PC-3 (cell line): ENCODE measurements at regions of chr9 and their contacts with region 1.

Region 1: GRCh38 chr9:111828193-111828592 is 33.5 kb upstream of the SHOC1 start:
- DNase-seq: peak; percentile 40
- ATAC-seq: no peak
- H3K4me3 ChIP-seq: no peak overlapping the region
- H3K27ac ChIP-seq: no peak overlapping the region
- H3K4me1 ChIP-seq: no peaks in the 10 kb centered on the region
- H3K27me3 ChIP-seq: no peaks in the 10 kb centered on the region
- CTCF ChIP-seq: peak; percentile 40; the same call in 1 of the 2 replicates

Region 2: DNA sequence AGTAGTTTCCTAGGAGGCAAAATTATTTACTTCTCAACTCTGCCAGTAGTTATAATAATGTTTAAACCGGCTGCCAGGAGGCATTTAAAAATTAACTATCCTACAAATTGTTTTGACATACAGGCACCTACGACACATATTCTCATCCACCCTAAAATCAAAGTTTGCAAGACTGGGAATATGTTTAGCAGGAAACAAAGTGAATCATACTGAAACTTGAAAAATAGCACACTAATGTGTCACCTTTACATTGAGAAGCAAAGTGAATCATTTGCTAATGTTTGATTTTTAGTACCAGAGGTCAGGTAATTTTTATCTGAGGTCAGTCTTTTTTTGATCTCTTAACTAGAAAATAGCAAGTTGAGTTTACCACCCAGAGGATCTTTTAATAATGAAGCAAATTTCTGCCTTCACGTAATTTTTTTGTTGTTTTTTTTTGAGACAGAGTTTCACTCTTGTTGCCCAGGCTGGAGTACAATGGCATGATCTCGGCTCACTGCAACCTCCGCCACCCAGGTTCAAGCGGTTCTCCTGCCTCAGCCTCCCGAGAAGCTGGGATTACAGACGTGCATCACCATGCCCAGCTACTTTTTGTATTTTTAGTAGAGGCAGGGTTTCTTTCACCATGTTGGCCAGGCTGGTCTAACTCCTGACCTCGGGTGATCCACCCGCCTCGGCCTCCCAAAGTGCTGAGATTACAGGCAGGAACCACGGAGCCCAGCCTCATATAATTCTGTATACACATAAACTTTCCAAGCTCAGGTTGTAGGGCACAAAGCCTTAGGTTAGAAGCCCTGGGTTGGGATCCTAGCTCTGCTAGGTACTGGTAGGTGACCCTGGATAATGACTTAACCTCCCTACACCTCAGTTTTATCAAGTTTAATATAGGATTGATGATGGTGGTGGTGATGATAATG is 192.7 kb after region 1 on chr9:
- CTCF ChIA-PET with region 1: no interaction called
- POLR2A ChIA-PET with region 1: no interaction called
- intact Hi-C with region 1: loop called (anchors 5 kb)
- DNase-seq: peak; percentile 89
- ATAC-seq: peak; percentile 90
- H3K4me3 ChIP-seq: no peak overlapping the region
- H3K27ac ChIP-seq: peak overlapping the region; percentile 95
- H3K4me1 ChIP-seq: peaks cover 23% of the 10 kb centered on the region
- H3K27me3 ChIP-seq: no peaks in the 10 kb centered on the region
- CTCF ChIP-seq: no peak

Region 3: GRCh38 chr9:112074250-112075008 is 246.2 kb after region 1 on chr9:
- CTCF ChIA-PET with region 1: interaction called, 4 read pairs
- POLR2A ChIA-PET with region 1: no interaction called
- intact Hi-C with region 1: loop called (anchors 1 kb)
- DNase-seq: peak; percentile 86
- ATAC-seq: peak; percentile 78
- H3K4me3 ChIP-seq: no peak overlapping the region
- H3K27ac ChIP-seq: peak overlapping the region; percentile 81
- H3K4me1 ChIP-seq: peaks cover 28% of the 10 kb centered on the region
- H3K27me3 ChIP-seq: no peaks in the 10 kb centered on the region
- CTCF ChIP-seq: peak; percentile 93

Region 4: DNA sequence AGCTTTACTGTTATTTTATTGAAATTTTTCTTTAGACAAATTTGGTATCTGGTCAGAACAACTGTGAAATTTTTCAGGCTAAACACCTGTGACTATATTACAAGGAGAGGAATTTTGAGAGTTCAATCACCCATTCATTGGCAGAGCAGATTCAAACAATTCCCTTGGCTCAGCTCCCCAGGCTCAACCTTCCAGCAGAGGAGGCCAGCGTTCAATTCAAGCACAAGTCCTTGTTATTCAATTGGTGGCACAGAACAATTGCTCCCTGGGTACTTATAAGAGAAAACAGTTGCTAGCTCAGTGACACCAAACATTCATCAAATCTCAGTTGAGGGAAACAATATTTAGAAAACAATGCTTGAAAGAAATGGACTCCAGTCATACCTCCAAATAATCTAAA is 263.6 kb after region 1 on chr9:
- CTCF ChIA-PET with region 1: no interaction called
- POLR2A ChIA-PET with region 1: no interaction called
- intact Hi-C with region 1: no loop called
- DNase-seq: no peak
- ATAC-seq: no peak
- H3K4me3 ChIP-seq: no peak overlapping the region
- H3K27ac ChIP-seq: no peak overlapping the region
- H3K4me1 ChIP-seq: no peaks in the 10 kb centered on the region
- H3K27me3 ChIP-seq: no peaks in the 10 kb centered on the region
- CTCF ChIP-seq: peak; percentile 48; the same call in 1 of the 2 replicates

Region 5: GRCh38 chr9:112971415-112971814 is 1143.2 kb after region 1 on chr9:
- CTCF ChIA-PET with region 1: no interaction called
- POLR2A ChIA-PET with region 1: no interaction called
- intact Hi-C with region 1: no loop called
- DNase-seq: peak; percentile 29
- ATAC-seq: peak; percentile 50; the same call in 1 of the 2 replicates
- H3K4me3 ChIP-seq: no peak overlapping the region
- H3K27ac ChIP-seq: no peak overlapping the region
- H3K4me1 ChIP-seq: no peaks in the 10 kb centered on the region
- H3K27me3 ChIP-seq: no peaks in the 10 kb centered on the region
- CTCF ChIP-seq: peak; percentile 39